RWPE1 (cell line): ENCODE measurements at regions of chr5 and their contacts with region 1.

Region 1: GRCh38 chr5:180868960-180869359 is 7.9 kb upstream of the ZFP62 start:
- DNase-seq: peak; percentile 93
- H3K27ac ChIP-seq: no peak overlapping the region
- CTCF ChIP-seq: peak; percentile 90

Region 2: DNA sequence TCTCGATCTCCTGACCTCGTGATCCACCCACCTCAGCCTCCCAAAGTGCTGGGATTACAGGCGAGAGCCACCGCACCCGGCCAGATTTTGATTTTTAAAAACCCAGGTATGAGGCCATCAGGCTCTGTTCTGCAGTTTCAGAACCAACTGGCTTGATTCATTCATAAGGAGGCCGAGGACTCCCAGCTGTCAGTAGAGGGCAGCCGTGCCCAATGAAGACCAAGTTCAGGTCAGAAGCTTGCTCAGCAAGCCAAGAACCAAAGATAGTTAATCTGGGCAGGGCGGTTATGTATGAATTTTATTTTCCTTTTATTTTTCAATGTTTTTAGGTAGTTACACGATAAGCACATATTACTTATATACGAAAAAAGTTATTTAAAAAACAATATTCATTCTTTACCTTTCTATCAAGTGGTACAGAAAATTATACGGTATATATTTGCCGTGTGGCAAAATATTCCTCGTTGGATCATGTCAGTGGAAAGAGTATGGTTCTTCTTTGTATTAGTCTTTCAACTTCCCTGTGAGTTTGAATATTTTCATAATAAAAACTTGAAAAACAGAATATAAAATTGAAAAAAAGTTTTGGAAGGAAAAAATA is 84.4 kb before region 1 on chr5:
- CTCF ChIA-PET with region 1: interaction called, 14 read pairs
- POLR2A ChIA-PET with region 1: no interaction called
- DNase-seq: peak; percentile 90
- H3K27ac ChIP-seq: no peak overlapping the region
- CTCF ChIP-seq: peak; percentile 95

Region 3: GRCh38 chr5:181100121-181101015 is 231.4 kb after region 1 on chr5:
- CTCF ChIA-PET with region 1: interaction called, 10 read pairs
- POLR2A ChIA-PET with region 1: no interaction called
- DNase-seq: no peak
- H3K27ac ChIP-seq: no peak overlapping the region
- CTCF ChIP-seq: no peak

Region 4: DNA sequence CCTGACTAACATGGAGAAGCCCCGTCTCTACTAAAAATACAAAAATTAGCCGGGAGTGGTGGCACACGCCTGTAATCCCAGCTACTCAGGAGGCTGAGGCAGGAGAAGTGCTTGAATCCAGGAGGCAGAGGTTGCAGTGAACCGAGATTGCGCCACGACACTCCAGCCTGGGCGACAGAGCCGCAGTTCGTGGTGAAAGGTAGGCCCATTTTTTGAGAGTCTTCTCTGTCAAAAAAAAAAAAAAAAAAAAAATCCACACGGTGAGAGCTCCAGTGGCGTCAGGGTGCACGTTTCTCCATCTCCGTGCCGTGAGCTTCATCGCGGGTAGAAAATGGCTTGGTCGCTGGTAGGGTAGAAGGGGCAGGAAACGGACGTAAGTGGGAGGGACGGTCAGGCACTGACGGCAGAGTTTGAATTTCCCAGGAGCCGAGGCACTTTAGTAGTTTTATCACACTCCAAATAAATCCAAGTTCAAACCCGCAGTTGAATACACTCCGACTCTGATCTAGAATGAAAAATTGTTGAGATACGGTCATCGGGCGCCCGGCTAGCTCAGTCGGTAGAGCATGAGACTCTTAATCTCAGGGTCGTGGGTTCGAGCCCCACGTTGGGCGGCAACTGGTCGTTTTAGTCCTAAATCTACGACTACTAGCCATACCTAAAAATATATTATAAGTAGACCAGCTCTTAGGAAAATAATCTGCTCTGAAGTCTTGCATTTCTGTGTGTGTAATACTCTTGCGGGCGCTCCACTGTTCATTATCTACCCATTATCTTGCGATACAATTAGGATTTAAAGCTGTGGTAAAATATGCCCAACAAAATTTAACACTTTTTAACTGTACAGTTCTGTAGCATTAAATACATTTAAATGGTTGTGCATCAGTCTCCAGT is 338.5 kb after region 1 on chr5:
- CTCF ChIA-PET with region 1: no interaction called
- POLR2A ChIA-PET with region 1: no interaction called
- DNase-seq: peak; percentile 82
- H3K27ac ChIP-seq: peak overlapping the region; percentile 96
- CTCF ChIP-seq: no peak